Right cardiac atrium (tissue), 5 donors: ENCODE measurements at regions of chr11 and their contacts with region 1.

Region 1: DNA sequence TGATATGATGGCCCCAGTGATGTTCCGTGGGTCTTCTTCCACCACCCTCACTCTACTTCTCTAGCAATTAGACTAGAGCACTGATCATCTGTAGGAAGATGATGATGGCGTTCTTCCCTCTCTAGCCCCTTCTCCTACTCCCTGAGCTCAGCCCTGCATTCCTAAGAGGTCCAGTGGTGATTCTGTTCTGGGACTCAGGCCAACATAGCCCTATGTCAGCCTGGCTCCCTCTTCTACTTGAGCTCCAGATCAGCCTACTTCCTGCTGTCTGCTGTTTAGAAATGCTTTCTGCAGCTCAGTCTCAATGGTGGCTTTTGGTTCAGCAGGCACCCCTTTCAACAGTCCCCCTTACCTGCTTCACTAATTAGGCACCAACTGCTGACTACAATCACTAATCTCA is 86.1 kb upstream of the ZBED5 start:
- DNase-seq: no peak
- ATAC-seq: peak in 1 of 2 donors; percentile 68
- H3K4me3 ChIP-seq: no peak overlapping the region
- H3K27ac ChIP-seq: no peak overlapping the region
- H3K4me1 ChIP-seq: peaks cover 3% of the 10 kb centered on the region
- H3K27me3 ChIP-seq: no peaks in the 10 kb centered on the region

Region 2: DNA sequence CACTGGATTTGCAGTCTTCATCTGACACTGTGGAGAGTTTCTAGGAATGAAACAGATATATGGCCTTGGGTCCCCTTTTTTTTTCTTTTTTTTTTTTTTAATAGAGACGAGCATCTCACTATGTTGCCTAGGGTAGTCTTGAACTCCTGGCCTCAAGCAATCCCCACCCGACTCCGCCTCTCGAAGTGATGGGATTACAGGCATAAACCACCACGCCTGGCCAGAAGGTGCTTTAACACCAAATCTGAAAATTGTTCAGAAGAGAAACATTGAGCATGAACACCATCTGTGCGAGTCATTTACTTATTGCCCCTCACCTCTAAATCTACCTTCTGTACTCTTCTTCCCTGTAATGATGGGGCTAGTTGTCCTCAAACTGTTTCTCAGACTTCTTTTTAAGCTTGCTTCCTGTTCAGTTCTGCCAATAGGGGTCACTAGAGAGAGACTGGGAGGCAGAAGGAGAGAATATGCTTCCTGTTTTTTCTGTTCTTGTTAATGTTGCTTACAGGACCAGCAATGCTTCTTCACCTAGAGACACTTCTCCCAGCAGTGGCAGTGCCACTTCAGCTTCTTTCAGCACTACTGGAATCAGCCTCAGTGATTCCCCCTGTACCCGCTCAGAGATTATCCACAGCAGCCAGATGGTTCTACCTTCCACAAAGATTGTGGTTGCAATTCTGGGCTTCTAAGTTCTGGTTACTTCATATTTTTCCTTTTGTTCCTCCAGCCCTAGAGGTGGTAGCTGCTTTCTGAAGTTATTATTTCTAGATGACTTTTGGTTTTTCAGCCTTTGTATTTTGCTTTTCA is 65.4 kb before region 1 on chr11:
- intact Hi-C with region 1: no loop called
- DNase-seq: no peak
- ATAC-seq: peak in 1 of 2 donors; percentile 33
- H3K4me3 ChIP-seq: no peak overlapping the region
- H3K27ac ChIP-seq: no peak overlapping the region
- H3K4me1 ChIP-seq: no peaks in the 10 kb centered on the region
- H3K27me3 ChIP-seq: no peaks in the 10 kb centered on the region

Region 3: DNA sequence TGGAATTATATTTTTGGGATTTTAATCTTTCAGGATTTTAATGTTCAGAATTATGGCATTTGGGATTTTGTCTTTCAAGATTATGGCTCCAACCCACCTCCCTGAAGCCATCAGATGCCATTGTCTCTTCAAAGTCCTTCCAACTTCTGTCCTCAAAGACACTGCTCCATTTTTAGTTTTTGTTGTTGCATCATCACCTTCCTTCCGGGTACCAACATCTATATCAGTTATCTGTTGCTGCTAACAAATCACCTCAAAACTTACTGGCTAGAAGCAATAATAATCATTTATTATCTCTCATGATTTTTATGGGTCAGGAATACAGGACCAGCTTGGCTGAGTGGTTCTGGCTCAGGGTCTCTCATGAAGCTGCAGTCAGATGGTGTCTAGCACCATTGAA is 52.7 kb after region 1 on chr11:
- intact Hi-C with region 1: loop called in 1 of 4 experiments (anchors 2 kb)
- DNase-seq: no peak
- ATAC-seq: no peak
- H3K4me3 ChIP-seq: no peak overlapping the region
- H3K27ac ChIP-seq: no peak overlapping the region
- H3K4me1 ChIP-seq: no peaks in the 10 kb centered on the region
- H3K27me3 ChIP-seq: no peaks in the 10 kb centered on the region

Region 4: DNA sequence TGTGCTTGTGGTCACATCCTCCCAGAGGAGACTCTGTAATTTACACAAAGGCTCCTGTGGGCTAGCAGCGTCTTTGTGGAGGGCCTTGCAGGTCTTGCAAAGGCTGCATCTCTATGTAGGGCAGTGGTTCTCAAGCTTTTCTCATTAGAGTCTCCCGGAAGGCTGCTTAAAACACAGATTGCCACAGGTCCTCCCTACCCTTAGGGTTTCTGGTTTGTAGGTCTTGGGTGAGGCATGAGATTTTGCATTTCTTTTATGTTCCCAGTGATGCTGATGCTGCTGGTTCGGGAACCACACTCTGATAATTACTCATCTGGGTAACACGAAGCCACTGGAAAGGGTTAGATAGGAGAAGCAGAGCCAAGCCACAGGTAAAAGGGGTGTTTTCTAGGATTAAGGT is 65.2 kb after region 1 on chr11:
- intact Hi-C with region 1: loop called in 1 of 4 experiments (anchors 5 kb)
- DNase-seq: no peak
- ATAC-seq: no peak
- H3K4me3 ChIP-seq: no peak overlapping the region
- H3K27ac ChIP-seq: no peak overlapping the region
- H3K4me1 ChIP-seq: no peaks in the 10 kb centered on the region
- H3K27me3 ChIP-seq: no peaks in the 10 kb centered on the region